ENCODE measurements at regions of chr9 and their contacts with region 1.

Region 1: DNA sequence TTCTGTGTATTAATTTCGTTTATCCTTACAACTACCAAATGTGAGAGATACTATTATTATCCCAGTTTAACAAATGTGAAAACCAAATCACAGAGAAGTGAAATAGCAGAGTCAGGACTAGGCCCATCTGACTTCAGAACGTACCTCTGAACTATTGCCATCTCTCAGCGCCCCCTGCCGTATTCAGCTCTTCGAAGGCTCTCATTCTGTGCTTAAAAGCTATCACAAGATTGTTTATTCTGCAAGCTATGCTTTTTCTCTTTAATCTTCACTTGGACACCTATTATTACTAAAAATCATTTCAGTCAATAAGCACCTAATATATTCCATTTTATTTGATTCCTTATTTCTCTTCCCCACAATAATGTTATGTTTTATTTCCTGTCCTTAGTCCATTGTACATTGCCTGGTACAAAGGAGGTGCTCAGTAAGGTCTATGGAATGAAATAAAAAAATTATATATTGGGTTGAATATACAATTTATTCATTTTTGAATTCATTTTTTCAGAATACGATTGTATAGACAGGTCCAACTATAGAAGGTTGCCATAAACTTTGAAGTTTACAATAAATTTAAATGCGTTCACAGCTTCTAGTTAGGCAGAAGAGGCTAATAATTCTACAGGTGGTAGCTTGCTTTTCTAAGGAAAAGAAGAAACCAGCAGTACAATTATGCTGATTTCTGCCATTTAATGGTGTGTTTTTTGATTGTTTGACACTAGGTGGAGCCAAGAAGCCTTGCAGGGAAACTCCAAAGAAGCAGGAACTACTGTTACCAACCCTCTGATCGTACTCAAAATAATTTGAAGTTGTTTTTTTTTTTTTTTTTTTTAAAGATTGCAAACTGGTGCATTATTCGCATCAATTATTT is 202.2 kb upstream of the DMRTA1 start:
- DNase-seq: peak in 3 of 9 experiments; percentile 21 to 58 (median 31)
- ATAC-seq: peak; percentile 56
- H3K4me3 ChIP-seq: no peak overlapping the region
- H3K4me3 Mint-ChIP-seq: peak overlapping the region; percentile 13
- H3K27ac ChIP-seq: no peak overlapping the region
- H3K27ac Mint-ChIP-seq: no peak overlapping the region
- H3K4me1 ChIP-seq: no peaks in the 10 kb centered on the region
- H3K4me1 Mint-ChIP-seq: peaks cover 2% of the 10 kb centered on the region
- H3K27me3 ChIP-seq: no peaks in the 10 kb centered on the region
- H3K27me3 Mint-ChIP-seq: peaks cover 4% of the 10 kb centered on the region
- CTCF ChIP-seq: peak; percentile 40

Region 2: GRCh38 chr9:22452415-22453010 is 208.1 kb after region 1 on chr9:
- CTCF ChIA-PET with region 1: interaction called, 4 read pairs
- POLR2A ChIA-PET with region 1: no interaction called
- intact Hi-C with region 1: loop called in 1 of 2 experiments (anchors 5 kb)
- DNase-seq: peak in 5 of 9 experiments; percentile 11 to 51 (median 40)
- ATAC-seq: peak; percentile 70
- H3K4me3 ChIP-seq: no peak overlapping the region
- H3K4me3 Mint-ChIP-seq: no peak overlapping the region
- H3K27ac ChIP-seq: no peak overlapping the region
- H3K27ac Mint-ChIP-seq: no peak overlapping the region
- H3K4me1 ChIP-seq: no peaks in the 10 kb centered on the region
- H3K4me1 Mint-ChIP-seq: peaks cover 5% of the 10 kb centered on the region
- H3K27me3 ChIP-seq: no peaks in the 10 kb centered on the region
- H3K27me3 Mint-ChIP-seq: peaks cover 31% of the 10 kb centered on the region
- CTCF ChIP-seq: peak; percentile 70

Region 3: GRCh38 chr9:22913518-22913917 is 669.1 kb after region 1 on chr9:
- CTCF ChIA-PET with region 1: no interaction called
- POLR2A ChIA-PET with region 1: no interaction called
- intact Hi-C with region 1: no loop called
- DNase-seq: no peak
- ATAC-seq: no peak
- H3K4me3 ChIP-seq: no peak overlapping the region
- H3K4me3 Mint-ChIP-seq: no peak overlapping the region
- H3K27ac ChIP-seq: no peak overlapping the region
- H3K27ac Mint-ChIP-seq: no peak overlapping the region
- H3K4me1 ChIP-seq: no peaks in the 10 kb centered on the region
- H3K4me1 Mint-ChIP-seq: no peaks in the 10 kb centered on the region
- H3K27me3 ChIP-seq: no peaks in the 10 kb centered on the region
- H3K27me3 Mint-ChIP-seq: no peaks in the 10 kb centered on the region
- CTCF ChIP-seq: no peak